ENCODE measurements at regions of chr1 and their contacts with region 1.

Region 1: GRCh38 chr1:24909388-24909898 is 20.6 kb downstream of the RUNX3 start:
- DNase-seq: no peak
- H3K4me3 ChIP-seq: no peak overlapping the region
- H3K4me3 Mint-ChIP-seq: peak overlapping the region; percentile 11 to 79 (median 53)
- H3K27ac ChIP-seq: peak overlapping the region; percentile 94
- H3K27ac Mint-ChIP-seq: peak overlapping the region; percentile 97 to 100 (median 100)
- H3K4me1 ChIP-seq: peaks cover 96% of the 10 kb centered on the region
- H3K4me1 Mint-ChIP-seq: peaks cover 66 to 96% (median 75%) of the 10 kb centered on the region in 3 donors
- H3K27me3 ChIP-seq: no peaks in the 10 kb centered on the region
- H3K27me3 Mint-ChIP-seq: peaks cover 0 to 4% of the 10 kb centered on the region in 2 donors

Region 2: GRCh38 chr1:24897767-24898483 is 11.5 kb before region 1 on chr1:
- CTCF ChIA-PET with region 1: interaction called, 39 read pairs
- POLR2A ChIA-PET with region 1: interaction called, 36 read pairs
- DNase-seq: peak in 3 of 5 donors; percentile 36 to 60 (median 43)
- H3K4me3 ChIP-seq: no peak overlapping the region
- H3K4me3 Mint-ChIP-seq: peak overlapping the region in 4 of 7 donors; percentile 28 to 68 (median 56)
- H3K27ac ChIP-seq: no peak overlapping the region
- H3K27ac Mint-ChIP-seq: peak overlapping the region; percentile 53 to 94 (median 87)
- H3K4me1 ChIP-seq: peaks cover 30% of the 10 kb centered on the region
- H3K4me1 Mint-ChIP-seq: peaks cover 44 to 60% (median 47%) of the 10 kb centered on the region in 3 donors
- H3K27me3 ChIP-seq: no peaks in the 10 kb centered on the region
- H3K27me3 Mint-ChIP-seq: peaks cover 0 to 4% of the 10 kb centered on the region in 2 donors

Region 3: GRCh38 chr1:24942789-24943188 is 33.3 kb after region 1 on chr1:
- CTCF ChIA-PET with region 1: no interaction called
- POLR2A ChIA-PET with region 1: no interaction called
- DNase-seq: no peak
- H3K4me3 ChIP-seq: no peak overlapping the region
- H3K4me3 Mint-ChIP-seq: no peak overlapping the region
- H3K27ac ChIP-seq: no peak overlapping the region
- H3K27ac Mint-ChIP-seq: peak overlapping the region in 1 of 8 donors; percentile 57
- H3K4me1 ChIP-seq: no peaks in the 10 kb centered on the region
- H3K4me1 Mint-ChIP-seq: peaks cover 13 to 77% (median 36%) of the 10 kb centered on the region in 3 donors
- H3K27me3 ChIP-seq: no peaks in the 10 kb centered on the region
- H3K27me3 Mint-ChIP-seq: no peaks in the 10 kb centered on the region

Region 4: GRCh38 chr1:25065795-25066238 is 156.4 kb after region 1 on chr1:
- CTCF ChIA-PET with region 1: no interaction called
- POLR2A ChIA-PET with region 1: interaction called, 12 read pairs
- DNase-seq: peak; percentile 12 to 90 (median 72)
- H3K4me3 ChIP-seq: peak overlapping the region; percentile 44
- H3K4me3 Mint-ChIP-seq: peak overlapping the region; percentile 70 to 95 (median 87)
- H3K27ac ChIP-seq: peak overlapping the region; percentile 68
- H3K27ac Mint-ChIP-seq: peak overlapping the region; percentile 90 to 98 (median 96)
- H3K4me1 ChIP-seq: peaks cover 34% of the 10 kb centered on the region
- H3K4me1 Mint-ChIP-seq: peaks cover 44 to 75% (median 48%) of the 10 kb centered on the region in 3 donors
- H3K27me3 ChIP-seq: no peaks in the 10 kb centered on the region
- H3K27me3 Mint-ChIP-seq: peaks cover 0 to 1% of the 10 kb centered on the region in 2 donors

Region 5: GRCh38 chr1:25090707-25091422 is 181.4 kb after region 1 on chr1:
- CTCF ChIA-PET with region 1: no interaction called
- POLR2A ChIA-PET with region 1: no interaction called
- DNase-seq: no peak
- H3K4me3 ChIP-seq: no peak overlapping the region
- H3K4me3 Mint-ChIP-seq: no peak overlapping the region
- H3K27ac ChIP-seq: no peak overlapping the region
- H3K27ac Mint-ChIP-seq: no peak overlapping the region
- H3K4me1 ChIP-seq: peaks cover 22% of the 10 kb centered on the region
- H3K4me1 Mint-ChIP-seq: peaks cover 32 to 68% (median 37%) of the 10 kb centered on the region in 3 donors
- H3K27me3 ChIP-seq: no peaks in the 10 kb centered on the region
- H3K27me3 Mint-ChIP-seq: peaks cover 0 to 2% of the 10 kb centered on the region in 2 donors

Measured in CD8-positive, alpha-beta memory T cell (primary cell).